BJ (cell line): ENCODE measurements at regions of chr6 and their contacts with region 1.

Region 1: GRCh38 chr6:41424370-41425058 is 89.1 kb downstream of the NCR2 start:
- DNase-seq: peak; percentile 15
- H3K4me3 ChIP-seq: no peak overlapping the region
- H3K27me3 ChIP-seq: peaks cover 27% of the 10 kb centered on the region
- CTCF ChIP-seq: peak; percentile 86

Region 2: DNA sequence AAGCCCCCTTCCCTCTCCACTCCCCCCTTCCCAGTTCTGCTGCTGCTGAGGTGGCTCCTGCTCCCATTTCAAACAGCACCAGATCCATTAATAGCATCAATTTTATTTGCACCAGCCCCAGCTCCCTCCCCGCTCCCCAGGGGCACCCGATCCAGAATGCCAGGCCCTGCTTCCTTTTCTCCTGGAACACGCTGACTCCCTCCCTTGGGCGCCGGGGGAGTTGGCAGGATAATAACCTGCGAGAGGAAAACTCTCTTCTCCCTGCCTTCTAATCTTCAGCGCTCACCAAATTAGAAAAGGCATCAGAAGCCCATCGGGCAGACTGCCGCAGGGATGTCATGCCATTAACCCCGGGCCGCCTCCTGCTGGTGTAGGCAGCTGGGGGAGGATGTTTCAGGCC is 11.3 kb before region 1 on chr6:
- CTCF ChIA-PET with region 1: interaction called, 15 read pairs
- POLR2A ChIA-PET with region 1: no interaction called
- DNase-seq: no peak
- H3K4me3 ChIP-seq: no peak overlapping the region
- H3K27me3 ChIP-seq: peaks cover 42% of the 10 kb centered on the region
- CTCF ChIP-seq: no peak

Region 3: DNA sequence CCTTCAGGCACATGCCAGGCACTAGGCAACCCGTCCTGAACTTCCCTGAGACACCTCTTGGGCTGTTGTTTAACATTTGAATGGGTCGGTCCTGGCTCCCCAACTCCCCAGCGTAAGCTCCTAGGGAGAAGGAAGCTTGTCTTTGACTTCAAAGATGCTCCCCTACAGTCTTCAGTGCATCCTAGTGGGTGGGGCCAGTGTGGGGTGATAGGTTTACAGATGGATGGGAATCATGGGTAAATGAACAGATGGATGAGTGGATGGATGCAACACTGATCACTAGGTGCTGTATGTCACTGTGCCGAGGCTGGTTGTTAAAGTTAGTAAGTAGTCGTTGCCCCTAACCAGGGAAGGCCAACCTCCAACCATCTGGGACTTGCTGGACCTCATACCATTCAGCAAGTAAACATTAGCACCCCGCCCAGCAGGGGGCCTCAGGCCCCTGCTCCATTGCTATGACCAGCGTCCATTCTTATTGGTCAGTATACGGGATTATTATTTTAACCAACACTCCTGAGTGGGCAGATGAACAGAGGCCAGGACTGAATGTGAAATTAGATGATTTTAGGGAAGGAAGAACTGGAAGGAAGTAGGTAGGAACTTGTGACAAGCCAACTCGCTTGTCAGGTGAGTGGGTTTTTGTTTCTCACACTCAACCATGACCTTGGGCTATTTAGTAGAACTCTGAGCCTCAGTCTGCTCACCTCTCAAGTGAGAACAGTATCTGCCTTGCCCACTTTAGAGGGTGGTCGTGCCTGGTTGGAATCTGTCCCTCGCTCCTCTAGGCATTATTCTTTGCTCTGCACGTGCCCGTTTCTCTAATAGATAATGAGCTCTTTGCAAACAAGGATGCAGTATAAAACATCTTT is 38.8 kb after region 1 on chr6:
- CTCF ChIA-PET with region 1: interaction called, 11 read pairs
- POLR2A ChIA-PET with region 1: no interaction called
- DNase-seq: no peak
- H3K4me3 ChIP-seq: no peak overlapping the region
- H3K27me3 ChIP-seq: peaks cover 5% of the 10 kb centered on the region; the same call in 1 of the 2 replicates
- CTCF ChIP-seq: peak; percentile 76

Region 4: GRCh38 chr6:41602864-41603608 is 178.5 kb after region 1 on chr6:
- CTCF ChIA-PET with region 1: interaction called, 13 read pairs
- POLR2A ChIA-PET with region 1: no interaction called
- DNase-seq: no peak
- H3K4me3 ChIP-seq: no peak overlapping the region
- H3K27me3 ChIP-seq: no peaks in the 10 kb centered on the region
- CTCF ChIP-seq: peak; percentile 94

Region 5: GRCh38 chr6:41689171-41690008 is 264.9 kb after region 1 on chr6:
- CTCF ChIA-PET with region 1: interaction called, 11 read pairs
- POLR2A ChIA-PET with region 1: no interaction called
- DNase-seq: no peak
- H3K4me3 ChIP-seq: no peak overlapping the region
- H3K27me3 ChIP-seq: no peaks in the 10 kb centered on the region
- CTCF ChIP-seq: no peak